ENCODE measurements at regions of chr4 and their contacts with region 1.

Region 1: GRCh38 chr4:674172-675035 is at the starts of genes ATP5ME and MYL5:
- DNase-seq: peak; percentile 97
- ATAC-seq: peak; percentile 92
- H3K4me3 Mint-ChIP-seq: peak within 1 kb of the TSS; percentile 84
- H3K27ac Mint-ChIP-seq: peak within 1 kb of the TSS; percentile 85
- H3K4me1 Mint-ChIP-seq: peaks cover 13% of the 10 kb centered on the region
- H3K27me3 Mint-ChIP-seq: no peaks in the 10 kb centered on the region
- CTCF ChIP-seq: peak; percentile 78
- total RNA-seq, gene ATP5ME: 221 to 234 TPM
- total RNA-seq, gene MYL5: 14.7 to 17.8 TPM

Region 2: DNA sequence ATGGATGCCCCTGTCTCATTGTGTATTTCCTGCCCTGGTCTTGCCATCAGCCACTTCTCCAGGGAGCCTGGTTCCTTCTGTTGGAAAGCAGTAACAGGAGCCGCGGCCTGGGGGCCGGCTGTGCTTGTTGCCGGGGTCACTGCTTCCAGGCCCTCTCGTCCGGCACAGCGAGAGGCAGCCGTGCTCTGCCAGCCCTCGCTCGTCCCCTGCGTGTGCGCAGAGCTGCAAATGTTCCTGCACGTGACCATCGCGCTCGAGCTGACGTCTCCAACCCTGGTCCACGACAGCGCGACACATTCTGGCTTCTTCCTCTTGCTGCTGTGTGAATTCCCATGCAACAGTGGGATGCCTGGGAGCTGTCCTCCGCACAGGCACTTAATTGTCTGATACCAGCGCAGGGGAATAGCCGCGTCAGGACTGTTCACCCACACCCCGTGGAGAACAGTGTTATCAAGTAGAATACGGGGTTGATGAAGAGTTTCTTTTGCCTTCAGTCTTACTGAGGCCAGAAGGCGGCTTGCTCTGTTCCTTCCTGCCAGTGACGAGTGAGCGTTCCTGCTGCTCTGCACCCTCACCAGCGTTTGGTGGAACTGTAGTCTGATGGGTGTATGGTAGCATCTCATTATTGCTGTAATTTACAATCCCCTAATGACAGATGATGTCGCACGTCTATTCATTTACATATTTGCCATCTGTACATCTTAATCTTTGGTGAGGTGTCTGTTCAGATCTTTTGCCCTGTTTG is 36.7 kb before region 1 on chr4:
- CTCF ChIA-PET with region 1: no interaction called
- POLR2A ChIA-PET with region 1: no interaction called
- intact Hi-C with region 1: no loop called
- DNase-seq: no peak
- ATAC-seq: no peak
- H3K4me3 Mint-ChIP-seq: no peak overlapping the region
- H3K27ac Mint-ChIP-seq: no peak overlapping the region
- H3K4me1 Mint-ChIP-seq: no peaks in the 10 kb centered on the region
- H3K27me3 Mint-ChIP-seq: peaks cover 8% of the 10 kb centered on the region
- CTCF ChIP-seq: no peak

Region 3: DNA sequence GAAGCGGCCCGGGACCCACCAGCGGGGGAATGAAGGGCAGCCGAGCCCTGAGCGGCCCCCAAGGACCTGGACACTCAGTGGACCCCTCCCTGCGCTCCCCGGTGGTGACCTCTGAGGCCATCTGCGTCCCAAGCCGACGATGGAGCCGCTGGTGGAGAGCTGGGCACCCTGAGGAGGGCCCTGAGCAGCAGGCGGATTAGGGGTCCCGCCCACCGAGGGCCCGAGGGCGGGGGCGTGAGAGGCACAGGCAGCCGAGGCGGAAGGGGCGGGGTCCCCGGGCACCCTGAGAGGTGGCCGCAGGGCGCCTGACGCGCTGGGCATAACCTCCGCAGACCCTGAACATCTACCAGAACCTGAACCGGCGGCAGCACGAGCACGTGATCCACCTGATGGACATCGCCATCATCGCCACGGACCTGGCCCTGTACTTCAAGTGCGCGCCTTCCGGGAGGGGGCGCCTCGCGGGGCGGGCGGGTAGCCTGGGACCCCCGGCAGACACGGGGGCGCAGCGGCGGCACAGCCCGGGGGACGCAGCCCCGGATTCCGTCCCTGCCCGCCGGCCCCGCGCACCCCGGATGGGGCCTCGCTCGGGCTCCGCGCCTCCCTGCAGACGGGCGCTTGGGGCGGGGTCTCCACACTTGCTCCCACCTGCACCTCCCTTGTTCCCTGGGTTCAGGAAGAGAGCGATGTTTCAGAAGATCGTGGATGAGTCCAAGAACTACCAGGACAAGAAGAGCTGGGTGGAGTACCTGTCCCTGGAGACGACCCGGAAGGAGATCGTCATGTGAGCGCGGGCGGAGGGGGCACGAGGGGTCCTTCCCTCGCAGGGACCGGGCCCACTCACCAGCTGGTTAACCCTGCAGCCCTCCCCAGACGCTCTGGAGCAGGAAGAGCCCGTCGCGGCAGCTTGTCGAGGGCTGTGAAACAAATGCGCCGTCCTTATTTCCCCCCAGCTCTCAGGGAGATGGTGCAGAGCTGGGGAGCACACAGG is 10.7 kb before region 1 on chr4:
- CTCF ChIA-PET with region 1: interaction called, 3 read pairs
- POLR2A ChIA-PET with region 1: interaction called, 34 read pairs
- intact Hi-C with region 1: no loop called
- DNase-seq: peak; percentile 89
- ATAC-seq: peak; percentile 85
- H3K4me3 Mint-ChIP-seq: peak overlapping the region; percentile 81
- H3K27ac Mint-ChIP-seq: peak overlapping the region; percentile 88
- H3K4me1 Mint-ChIP-seq: peaks cover 21% of the 10 kb centered on the region
- H3K27me3 Mint-ChIP-seq: no peaks in the 10 kb centered on the region
- CTCF ChIP-seq: no peak

Region 4: DNA sequence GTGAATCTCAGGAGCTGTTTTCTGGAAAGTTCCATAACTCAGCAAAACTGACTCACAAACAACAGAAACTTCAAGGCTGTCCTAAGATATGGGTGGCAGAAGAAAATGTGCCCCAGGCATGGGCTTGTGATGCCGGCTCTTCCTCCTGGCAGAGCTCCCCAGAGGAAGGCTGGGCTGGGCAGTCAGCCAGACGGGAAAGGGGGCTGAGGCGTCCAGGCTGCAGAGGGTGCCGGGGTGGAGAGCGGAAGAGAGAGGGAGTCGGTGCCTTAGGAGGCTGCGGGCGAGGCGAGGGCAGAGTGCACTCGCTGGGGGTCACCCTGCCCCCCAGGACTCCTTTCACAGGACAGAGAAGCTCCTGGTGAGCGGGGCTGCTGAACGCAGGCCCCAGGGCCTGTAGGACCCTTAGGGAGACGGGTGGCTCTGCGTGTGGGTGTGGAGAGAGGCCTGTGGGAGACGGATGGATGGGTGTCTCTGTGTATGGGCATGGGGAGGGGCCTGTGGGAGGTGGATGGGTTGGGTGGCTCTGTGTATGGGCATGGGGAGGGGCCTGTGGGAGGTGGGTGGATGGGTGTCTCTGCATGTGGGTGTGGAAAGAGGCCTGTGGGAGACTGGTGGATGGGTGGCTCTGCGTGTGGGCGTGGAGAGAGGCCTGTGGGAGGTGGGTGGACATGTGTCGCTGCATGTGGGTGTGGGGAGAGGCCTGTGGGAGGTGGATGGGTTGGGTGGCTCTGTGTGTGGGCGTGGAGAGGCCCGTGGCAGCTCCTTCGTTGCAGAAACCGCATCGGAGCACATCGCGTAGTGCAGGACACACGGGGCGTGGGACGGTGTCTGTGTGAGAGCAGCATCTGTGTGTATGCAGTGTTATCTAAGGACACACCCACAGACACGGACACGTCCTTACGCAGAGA is 47.1 kb after region 1 on chr4:
- CTCF ChIA-PET with region 1: no interaction called
- POLR2A ChIA-PET with region 1: no interaction called
- intact Hi-C with region 1: no loop called
- DNase-seq: no peak
- ATAC-seq: no peak
- H3K4me3 Mint-ChIP-seq: no peak overlapping the region
- H3K27ac Mint-ChIP-seq: peak overlapping the region; percentile 25
- H3K4me1 Mint-ChIP-seq: peaks cover 15% of the 10 kb centered on the region
- H3K27me3 Mint-ChIP-seq: no peaks in the 10 kb centered on the region
- CTCF ChIP-seq: no peak